ENCODE measurements at regions of chr7 and their contacts with region 1.

Region 1: DNA sequence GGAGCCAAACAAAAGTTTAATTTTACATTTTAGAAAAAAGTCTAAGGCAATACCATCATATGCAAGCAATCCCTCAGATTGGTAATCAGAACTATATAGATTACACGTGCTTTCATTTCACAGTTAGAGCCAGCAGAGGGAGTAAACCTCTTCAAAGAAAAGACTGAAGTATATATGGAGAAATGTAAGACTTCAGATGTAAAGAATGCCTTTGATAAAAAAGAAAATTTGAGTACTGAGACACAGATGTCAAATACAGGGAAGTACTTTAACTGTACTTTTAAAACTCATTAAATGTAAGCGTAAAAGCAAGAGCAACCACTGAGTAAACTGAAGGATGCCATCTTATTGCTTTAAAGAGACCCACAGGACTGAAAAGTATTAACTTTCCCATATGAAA is 101.4 kb upstream of the FAM133B start:
- DNase-seq: no peak

Region 2: GRCh38 chr7:92641921-92642511 is 49.6 kb before region 1 on chr7:
- intact Hi-C with region 1: loop called in 1 of 2 experiments (anchors 10 kb)
- DNase-seq: no peak

Measured in posterior vena cava (tissue), 2 donors.